Common myeloid progenitor, CD34-positive (primary cell): ENCODE measurements at regions of chr13 and their contacts with region 1.

Region 1: DNA sequence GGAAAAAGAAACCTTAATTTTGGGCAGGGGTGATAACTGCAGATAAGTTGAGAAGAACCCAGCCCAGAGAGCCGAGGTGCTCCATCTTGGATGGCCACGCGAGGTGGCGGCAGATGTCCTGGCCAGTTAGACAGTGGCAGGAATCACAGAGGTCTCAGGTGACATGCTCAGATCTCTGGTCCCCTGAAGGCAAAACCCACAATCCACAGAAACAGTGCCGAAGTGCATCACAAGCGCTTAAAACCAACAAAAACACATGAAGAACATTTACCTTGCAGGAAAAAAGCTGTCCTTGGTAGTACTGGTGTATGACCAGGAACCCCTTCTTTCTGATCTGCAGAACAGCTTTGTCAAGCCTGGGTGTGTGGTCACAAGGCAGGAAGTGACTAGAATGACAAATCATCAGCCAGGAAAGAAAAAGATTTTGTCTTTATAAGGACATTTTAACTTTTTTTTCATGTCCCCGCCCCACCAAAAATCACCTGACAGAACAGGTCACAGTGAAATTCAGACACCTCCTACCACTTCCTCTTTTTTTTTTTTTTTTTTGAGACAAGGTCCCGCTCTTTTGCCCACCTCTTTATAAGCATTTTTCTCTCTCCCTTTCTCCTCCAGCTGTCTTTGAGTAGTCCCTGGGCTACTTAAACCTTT is at the start of gene LCP1:
- DNase-seq: peak; percentile 95 to 99 (median 98)
- H3K4me3 ChIP-seq: peak within 1 kb of the TSS; percentile 60 to 97 (median 84)
- H3K27ac ChIP-seq: peak within 1 kb of the TSS; percentile 74 to 89
- H3K4me1 ChIP-seq: peaks cover 47 to 67% (median 50%) of the 10 kb centered on the region in 4 experiments
- H3K27me3 ChIP-seq: no peaks in the 10 kb centered on the region

Region 2: GRCh38 chr13:46168341-46168740 is 13.6 kb before region 1 on chr13:
- CTCF ChIA-PET with region 1: interaction called, 17 read pairs
- POLR2A ChIA-PET with region 1: interaction called, 4 read pairs
- DNase-seq: peak in 2 of 3 donors; percentile 63 to 66
- H3K4me3 ChIP-seq: peak overlapping the region in 1 of 7 experiments; percentile 11
- H3K27ac ChIP-seq: peak overlapping the region; percentile 3 to 56
- H3K4me1 ChIP-seq: peaks cover 58 to 89% (median 80%) of the 10 kb centered on the region in 4 experiments
- H3K27me3 ChIP-seq: no peaks in the 10 kb centered on the region

Region 3: GRCh38 chr13:46192399-46192798 is 10.4 kb after region 1 on chr13:
- CTCF ChIA-PET with region 1: interaction called, 12 read pairs
- POLR2A ChIA-PET with region 1: no interaction called
- DNase-seq: no peak
- H3K4me3 ChIP-seq: no peak overlapping the region
- H3K27ac ChIP-seq: no peak overlapping the region
- H3K4me1 ChIP-seq: peaks cover 3 to 29% (median 18%) of the 10 kb centered on the region in 4 experiments
- H3K27me3 ChIP-seq: no peaks in the 10 kb centered on the region

Region 4: GRCh38 chr13:46198505-46199193 is 16.7 kb after region 1 on chr13:
- CTCF ChIA-PET with region 1: interaction called, 14 read pairs
- POLR2A ChIA-PET with region 1: interaction called, 4 read pairs
- DNase-seq: peak in 2 of 3 donors; percentile 61 to 69
- H3K4me3 ChIP-seq: peak overlapping the region in 2 of 7 experiments; percentile 7 to 34
- H3K27ac ChIP-seq: no peak overlapping the region
- H3K4me1 ChIP-seq: peaks cover 42 to 78% (median 63%) of the 10 kb centered on the region in 4 experiments
- H3K27me3 ChIP-seq: no peaks in the 10 kb centered on the region

Region 5: GRCh38 chr13:46633416-46633815 is 451.5 kb after region 1 on chr13:
- CTCF ChIA-PET with region 1: no interaction called
- POLR2A ChIA-PET with region 1: no interaction called
- DNase-seq: no peak
- H3K4me3 ChIP-seq: no peak overlapping the region
- H3K27ac ChIP-seq: no peak overlapping the region
- H3K4me1 ChIP-seq: peaks cover 5 to 28% (median 19%) of the 10 kb centered on the region in 4 experiments
- H3K27me3 ChIP-seq: no peaks in the 10 kb centered on the region